Colonic mucosa (tissue), 4 donors: ENCODE measurements at regions of chr1 and their contacts with region 1.

Region 1: GRCh38 chr1:207963427-207964194 is 52.7 kb upstream of the CD34 start:
- DNase-seq: peak; percentile 88
- H3K4me3 ChIP-seq: peak overlapping the region; percentile 66
- H3K27ac ChIP-seq: peak overlapping the region; percentile 93
- H3K4me1 ChIP-seq: peaks cover 6% of the 10 kb centered on the region
- H3K27me3 ChIP-seq: peaks cover 9% of the 10 kb centered on the region
- CTCF ChIP-seq: peak; percentile 99

Region 2: DNA sequence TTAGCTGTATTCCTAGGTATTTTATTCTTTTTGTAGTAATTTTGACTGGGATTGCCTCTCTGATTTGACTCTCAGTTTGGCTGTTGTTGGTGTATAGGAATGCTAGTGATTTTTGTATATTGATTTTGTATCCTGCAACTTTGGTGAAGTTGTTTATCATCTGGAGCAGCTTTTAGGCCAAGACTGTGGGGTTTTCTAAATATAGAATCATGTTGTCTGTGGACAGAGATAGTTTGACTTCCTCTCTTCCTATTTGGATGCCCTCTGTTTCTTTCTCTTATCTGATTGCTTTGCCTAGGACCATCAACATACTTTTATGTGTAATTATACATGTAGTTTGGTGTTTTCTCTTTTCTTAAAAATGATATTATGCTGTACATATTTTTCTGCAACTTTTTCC is 184.6 kb before region 1 on chr1:
- intact Hi-C with region 1: no loop called
- DNase-seq: no peak
- H3K4me3 ChIP-seq: no peak overlapping the region
- H3K27ac ChIP-seq: no peak overlapping the region
- H3K4me1 ChIP-seq: no peaks in the 10 kb centered on the region
- H3K27me3 ChIP-seq: no peaks in the 10 kb centered on the region
- CTCF ChIP-seq: no peak

Region 3: GRCh38 chr1:207828485-207829158 is 135.0 kb before region 1 on chr1:
- intact Hi-C with region 1: loop called (anchors 5 kb)
- DNase-seq: peak; percentile 87
- H3K4me3 ChIP-seq: no peak overlapping the region
- H3K27ac ChIP-seq: peak overlapping the region; percentile 93
- H3K4me1 ChIP-seq: peaks cover 31% of the 10 kb centered on the region
- H3K27me3 ChIP-seq: no peaks in the 10 kb centered on the region
- CTCF ChIP-seq: peak; percentile 77

Region 4: GRCh38 chr1:207885129-207886032 is 78.2 kb before region 1 on chr1:
- intact Hi-C with region 1: loop called (anchors 2 kb)
- DNase-seq: peak; percentile 86
- H3K4me3 ChIP-seq: no peak overlapping the region
- H3K27ac ChIP-seq: no peak overlapping the region
- H3K4me1 ChIP-seq: no peaks in the 10 kb centered on the region
- H3K27me3 ChIP-seq: no peaks in the 10 kb centered on the region
- CTCF ChIP-seq: peak; percentile 94

Region 5: GRCh38 chr1:208071435-208072031 is 107.9 kb after region 1 on chr1:
- intact Hi-C with region 1: no loop called
- DNase-seq: no peak
- H3K4me3 ChIP-seq: no peak overlapping the region
- H3K27ac ChIP-seq: no peak overlapping the region
- H3K4me1 ChIP-seq: no peaks in the 10 kb centered on the region
- H3K27me3 ChIP-seq: no peaks in the 10 kb centered on the region
- CTCF ChIP-seq: no peak

Region 6: GRCh38 chr1:208557046-208557722 is 593.6 kb after region 1 on chr1:
- intact Hi-C with region 1: no loop called
- DNase-seq: no peak
- H3K4me3 ChIP-seq: no peak overlapping the region
- H3K27ac ChIP-seq: no peak overlapping the region
- H3K4me1 ChIP-seq: no peaks in the 10 kb centered on the region
- H3K27me3 ChIP-seq: no peaks in the 10 kb centered on the region
- CTCF ChIP-seq: no peak

Region 7: DNA sequence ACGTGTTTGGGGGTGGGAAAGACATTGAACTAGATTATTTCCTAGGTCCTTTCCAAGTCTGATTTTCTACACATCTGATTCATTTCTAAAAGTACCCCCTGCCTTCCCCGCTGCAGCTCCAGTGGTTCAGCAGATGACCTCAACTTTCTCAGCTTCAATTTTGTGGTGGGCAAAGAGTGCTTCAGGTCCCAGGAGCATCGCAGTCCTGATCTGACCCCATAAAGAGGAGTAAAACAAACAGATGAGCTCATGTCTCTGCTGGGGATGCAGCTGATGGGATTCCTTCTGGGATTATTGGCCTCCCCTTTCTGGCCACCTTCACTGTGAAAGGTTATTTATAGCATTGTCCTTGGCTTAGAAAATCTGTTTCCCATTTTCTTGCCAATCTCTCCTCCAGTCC is 617.6 kb after region 1 on chr1:
- intact Hi-C with region 1: no loop called
- DNase-seq: no peak
- H3K4me3 ChIP-seq: no peak overlapping the region
- H3K27ac ChIP-seq: no peak overlapping the region
- H3K4me1 ChIP-seq: no peaks in the 10 kb centered on the region
- H3K27me3 ChIP-seq: no peaks in the 10 kb centered on the region
- CTCF ChIP-seq: no peak